Activated T-helper 1 cell treated with anti-CD3 and anti-CD28 coated beads, Interleukin-12 subunit alpha, Interleukin-12 subunit beta, Interleukin-2, Interleukin-4 antibody, amounts not matched to agents 30 ng/mL and 10 ng/mL and 1 ng/mL, durations not matched to agents 14 hours and 24 hours and 36 hours (primary cell): ENCODE measurements at regions of chr5 and their contacts with region 1.

Region 1: DNA sequence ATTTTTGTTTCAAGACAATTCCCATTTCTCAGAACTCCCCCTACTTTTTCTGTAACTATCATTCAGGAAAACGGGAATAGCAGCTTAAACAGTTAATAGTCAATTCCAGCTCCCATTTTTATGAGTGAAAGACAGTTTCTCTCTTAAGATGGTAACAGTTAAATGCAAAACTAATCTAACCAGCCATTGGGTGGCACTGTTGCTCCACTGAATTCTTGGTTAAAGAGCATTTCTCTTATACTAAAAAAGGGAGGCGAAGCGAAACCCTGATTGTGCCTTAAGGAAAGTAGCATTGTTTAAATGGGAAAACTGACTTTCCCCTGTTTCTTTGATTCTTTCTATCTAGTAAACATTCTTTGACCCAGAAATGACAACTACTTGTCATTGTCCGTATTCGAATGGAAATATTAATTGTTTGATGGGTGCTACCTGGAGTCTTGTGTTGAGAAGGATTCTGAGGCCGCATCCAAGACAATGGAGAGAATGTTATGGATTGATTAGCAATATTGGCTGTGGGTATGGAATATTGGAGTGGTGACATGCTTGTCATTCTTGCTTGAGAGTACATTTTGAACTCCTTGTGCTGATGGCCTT is 507.8 kb downstream of the MAT2B start:
- DNase-seq: no peak
- H3K4me3 Mint-ChIP-seq: no peak overlapping the region
- H3K27ac Mint-ChIP-seq: no peak overlapping the region
- H3K4me1 Mint-ChIP-seq: no peaks in the 10 kb centered on the region
- H3K27me3 Mint-ChIP-seq: no peaks in the 10 kb centered on the region

Region 2: GRCh38 chr5:163963881-163964280 is 49.3 kb before region 1 on chr5:
- intact Hi-C with region 1: no loop called
- DNase-seq: no peak
- H3K4me3 Mint-ChIP-seq: no peak overlapping the region
- H3K27ac Mint-ChIP-seq: no peak overlapping the region
- H3K4me1 Mint-ChIP-seq: no peaks in the 10 kb centered on the region
- H3K27me3 Mint-ChIP-seq: no peaks in the 10 kb centered on the region

Region 3: GRCh38 chr5:164504141-164504772 is 491.1 kb after region 1 on chr5:
- intact Hi-C with region 1: loop called (anchors 1 kb)
- DNase-seq: no peak
- H3K4me3 Mint-ChIP-seq: no peak overlapping the region
- H3K27ac Mint-ChIP-seq: no peak overlapping the region
- H3K4me1 Mint-ChIP-seq: no peaks in the 10 kb centered on the region
- H3K27me3 Mint-ChIP-seq: no peaks in the 10 kb centered on the region

Region 4: GRCh38 chr5:165209086-165209727 is 1196.0 kb after region 1 on chr5:
- intact Hi-C with region 1: loop called (anchors 2 kb)
- DNase-seq: no peak
- H3K4me3 Mint-ChIP-seq: no peak overlapping the region
- H3K27ac Mint-ChIP-seq: no peak overlapping the region
- H3K4me1 Mint-ChIP-seq: no peaks in the 10 kb centered on the region
- H3K27me3 Mint-ChIP-seq: peaks cover 3% of the 10 kb centered on the region